ENCODE measurements at regions of chr12 and their contacts with region 1.

Region 1: GRCh38 chr12:32755654-32756475 is at the start of gene YARS2:
- DNase-seq: peak; percentile 95
- H3K4me3 Mint-ChIP-seq: peak within 1 kb of the TSS; percentile 89
- H3K27ac Mint-ChIP-seq: peak within 1 kb of the TSS; percentile 92
- H3K4me1 Mint-ChIP-seq: peaks cover 16% of the 10 kb centered on the region
- H3K27me3 Mint-ChIP-seq: no peaks in the 10 kb centered on the region
- total RNA-seq, gene YARS2: 20.1 to 24.8 TPM

Region 2: GRCh38 chr12:32139064-32139421 is 616.8 kb before region 1 on chr12:
- CTCF ChIA-PET with region 1: no interaction called
- intact Hi-C with region 1: loop called (anchors 10 kb)
- DNase-seq: peak; percentile 74
- H3K4me3 Mint-ChIP-seq: peak overlapping the region; percentile 71
- H3K27ac Mint-ChIP-seq: no peak overlapping the region
- H3K4me1 Mint-ChIP-seq: peaks cover 24% of the 10 kb centered on the region
- H3K27me3 Mint-ChIP-seq: peaks cover 2% of the 10 kb centered on the region

Region 3: DNA sequence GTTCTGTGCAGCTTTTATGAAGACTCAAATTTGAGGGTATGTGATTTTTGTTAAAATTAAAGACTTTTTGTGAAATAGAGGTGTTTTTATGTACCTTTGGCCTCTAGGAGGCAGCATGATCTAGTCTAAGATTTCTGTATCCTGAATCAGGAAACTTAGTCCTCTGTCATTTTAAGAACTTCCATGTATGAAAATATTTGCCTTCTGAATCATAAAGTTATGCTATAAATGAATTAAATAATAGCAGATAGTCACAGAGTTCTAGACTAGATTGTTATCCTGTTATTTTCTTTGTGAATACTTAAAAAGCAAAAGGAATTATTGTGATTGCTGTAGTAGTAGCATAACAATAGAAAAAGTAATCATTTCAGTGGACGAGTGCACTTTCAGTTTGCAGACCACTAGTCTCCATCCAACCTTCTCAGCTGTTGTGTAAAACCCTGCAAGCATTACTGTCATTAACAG is 300.2 kb before region 1 on chr12:
- CTCF ChIA-PET with region 1: interaction called, 29 read pairs
- intact Hi-C with region 1: loop called (anchors 1 kb)
- DNase-seq: peak; percentile 13
- H3K4me3 Mint-ChIP-seq: no peak overlapping the region
- H3K27ac Mint-ChIP-seq: no peak overlapping the region
- H3K4me1 Mint-ChIP-seq: no peaks in the 10 kb centered on the region
- H3K27me3 Mint-ChIP-seq: no peaks in the 10 kb centered on the region

Region 4: GRCh38 chr12:32679091-32679919 is 76.6 kb before region 1 on chr12 and contains the start of gene DNM1L:
- CTCF ChIA-PET with region 1: interaction called, 4 read pairs
- intact Hi-C with region 1: loop called (anchors 1 kb)
- DNase-seq: peak; percentile 94
- H3K4me3 Mint-ChIP-seq: peak within 1 kb of the TSS; percentile 81
- H3K27ac Mint-ChIP-seq: peak within 1 kb of the TSS; percentile 82
- H3K4me1 Mint-ChIP-seq: peaks cover 24% of the 10 kb centered on the region
- H3K27me3 Mint-ChIP-seq: no peaks in the 10 kb centered on the region
- total RNA-seq, gene DNM1L: 54.4 to 61.5 TPM

Region 5: GRCh38 chr12:32918890-32919801 is 163.3 kb after region 1 on chr12:
- CTCF ChIA-PET with region 1: interaction called, 14 read pairs
- intact Hi-C with region 1: loop called (anchors 1 kb)
- DNase-seq: peak; percentile 8
- H3K4me3 Mint-ChIP-seq: no peak overlapping the region
- H3K27ac Mint-ChIP-seq: no peak overlapping the region
- H3K4me1 Mint-ChIP-seq: no peaks in the 10 kb centered on the region
- H3K27me3 Mint-ChIP-seq: peaks cover 14% of the 10 kb centered on the region

Region 6: DNA sequence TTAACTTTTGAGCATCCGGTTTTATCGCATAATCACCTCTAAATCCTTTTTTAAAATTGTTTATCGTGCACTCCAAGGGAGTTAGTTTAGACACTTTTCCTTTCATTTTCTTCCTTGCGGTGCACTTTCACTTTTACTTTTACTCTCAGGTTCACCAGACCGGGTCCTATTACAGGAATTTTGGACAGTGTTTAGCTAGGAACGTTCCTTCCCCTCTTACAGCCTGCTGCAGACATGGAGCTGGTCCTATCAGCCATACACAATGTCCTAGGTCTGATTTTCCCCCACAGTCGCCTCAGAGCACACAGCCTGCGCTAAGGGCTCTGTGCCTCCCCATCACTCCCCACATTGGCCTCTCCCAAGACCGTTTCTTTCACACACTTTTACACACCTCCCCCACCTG is 1370.4 kb after region 1 on chr12:
- CTCF ChIA-PET with region 1: interaction called, 3 read pairs
- intact Hi-C with region 1: loop called (anchors 5 kb)
- DNase-seq: no peak
- H3K4me3 Mint-ChIP-seq: peak overlapping the region; percentile 3
- H3K27ac Mint-ChIP-seq: no peak overlapping the region
- H3K4me1 Mint-ChIP-seq: peaks cover 9% of the 10 kb centered on the region
- H3K27me3 Mint-ChIP-seq: peaks cover 30% of the 10 kb centered on the region